ENCODE measurements at regions of chr4 and their contacts with region 1.

Region 1: DNA sequence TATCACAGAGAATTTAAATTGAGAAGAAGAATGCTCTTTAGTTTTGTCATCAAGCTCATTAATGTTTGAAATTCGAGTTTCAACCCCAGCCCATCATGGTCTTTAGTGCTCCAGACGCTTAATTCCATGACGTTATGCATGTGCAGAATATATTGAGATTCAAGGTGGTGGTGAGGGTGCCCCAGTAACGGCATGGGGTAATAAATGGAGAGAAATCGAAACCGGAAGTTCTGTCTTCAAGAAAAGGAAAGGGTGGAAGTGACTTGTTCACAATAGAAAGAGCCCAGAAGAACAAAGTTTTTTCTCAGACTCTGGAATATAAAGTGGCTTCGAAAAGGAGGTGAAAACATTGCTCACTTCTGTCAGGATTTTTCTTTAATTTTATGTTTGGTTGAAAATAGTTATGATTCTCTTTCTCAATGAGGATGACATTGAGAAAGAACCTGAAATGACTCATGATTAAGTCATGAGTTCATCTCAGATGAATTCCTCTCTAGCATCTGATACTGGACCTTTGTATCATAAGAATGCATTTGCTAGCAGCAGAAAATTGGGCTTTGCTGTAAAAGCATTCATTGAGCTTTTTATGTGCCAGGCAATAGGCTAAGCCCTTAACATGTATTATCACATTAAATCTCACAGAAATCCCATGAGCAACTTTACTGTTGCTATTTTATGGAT is 779 bp upstream of the DDX60L start:
- DNase-seq: peak; percentile 85
- ATAC-seq: peak; percentile 21; the same call in 1 of the 2 replicates
- H3K4me3 ChIP-seq: peak overlapping the region; percentile 62
- H3K27ac ChIP-seq: peak overlapping the region; percentile 80
- H3K4me1 ChIP-seq: peaks cover 10% of the 10 kb centered on the region
- H3K27me3 ChIP-seq: no peaks in the 10 kb centered on the region
- CTCF ChIP-seq: no peak
- POLR2A ChIP-seq: no peak
- RAD21 ChIP-seq: no peak

Region 2: GRCh38 chr4:168153596-168154440 is 327.3 kb before region 1 on chr4:
- CTCF ChIA-PET with region 1: no interaction called
- POLR2A ChIA-PET with region 1: no interaction called
- dilution Hi-C with region 1: no loop called
- in situ Hi-C with region 1: no loop called
- intact Hi-C with region 1: no loop called
- DNase-seq: peak; percentile 83
- ATAC-seq: peak; percentile 91
- H3K4me3 ChIP-seq: peak overlapping the region; percentile 24; the same call in 1 of the 2 replicates
- H3K27ac ChIP-seq: no peak overlapping the region
- H3K4me1 ChIP-seq: no peaks in the 10 kb centered on the region
- H3K27me3 ChIP-seq: no peaks in the 10 kb centered on the region
- CTCF ChIP-seq: peak; percentile 87
- POLR2A ChIP-seq: no peak
- RAD21 ChIP-seq: peak; percentile 83

Region 3: DNA sequence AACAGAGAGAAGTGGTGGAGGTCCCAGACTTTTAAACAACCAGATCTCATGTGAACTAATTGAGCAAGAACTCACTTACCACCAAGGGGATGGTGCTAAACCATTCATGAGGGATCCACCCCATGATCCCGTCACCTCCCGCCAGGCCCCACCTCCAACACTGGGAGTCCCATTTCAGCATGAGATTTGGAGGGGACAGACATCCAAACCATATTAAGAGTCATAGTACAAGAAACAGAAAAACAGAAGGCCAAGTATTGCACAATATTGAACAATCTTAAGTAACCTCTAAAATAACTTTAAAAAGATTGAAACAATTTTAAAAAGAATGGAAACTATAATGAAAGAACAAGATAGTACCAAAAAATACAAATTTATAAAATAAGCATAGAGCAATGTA is 419.0 kb after region 1 on chr4:
- CTCF ChIA-PET with region 1: no interaction called
- POLR2A ChIA-PET with region 1: interaction called, 19 read pairs
- dilution Hi-C with region 1: no loop called
- in situ Hi-C with region 1: no loop called
- intact Hi-C with region 1: no loop called
- DNase-seq: no peak
- ATAC-seq: no peak; the same call in 1 of the 2 replicates
- H3K4me3 ChIP-seq: no peak overlapping the region
- H3K27ac ChIP-seq: peak overlapping the region; percentile 69; the same call in 1 of the 2 replicates
- H3K4me1 ChIP-seq: no peaks in the 10 kb centered on the region
- H3K27me3 ChIP-seq: no peaks in the 10 kb centered on the region
- CTCF ChIP-seq: no peak
- POLR2A ChIP-seq: no peak
- RAD21 ChIP-seq: no peak

Region 4: GRCh38 chr4:169147191-169147590 is 666.1 kb after region 1 on chr4:
- CTCF ChIA-PET with region 1: no interaction called
- POLR2A ChIA-PET with region 1: no interaction called
- dilution Hi-C with region 1: no loop called
- in situ Hi-C with region 1: no loop called
- intact Hi-C with region 1: no loop called
- DNase-seq: peak; percentile 34
- ATAC-seq: no peak
- H3K4me3 ChIP-seq: no peak overlapping the region
- H3K27ac ChIP-seq: no peak overlapping the region
- H3K4me1 ChIP-seq: peaks cover 9% of the 10 kb centered on the region
- H3K27me3 ChIP-seq: no peaks in the 10 kb centered on the region
- CTCF ChIP-seq: no peak
- POLR2A ChIP-seq: no peak
- RAD21 ChIP-seq: no peak

Region 5: DNA sequence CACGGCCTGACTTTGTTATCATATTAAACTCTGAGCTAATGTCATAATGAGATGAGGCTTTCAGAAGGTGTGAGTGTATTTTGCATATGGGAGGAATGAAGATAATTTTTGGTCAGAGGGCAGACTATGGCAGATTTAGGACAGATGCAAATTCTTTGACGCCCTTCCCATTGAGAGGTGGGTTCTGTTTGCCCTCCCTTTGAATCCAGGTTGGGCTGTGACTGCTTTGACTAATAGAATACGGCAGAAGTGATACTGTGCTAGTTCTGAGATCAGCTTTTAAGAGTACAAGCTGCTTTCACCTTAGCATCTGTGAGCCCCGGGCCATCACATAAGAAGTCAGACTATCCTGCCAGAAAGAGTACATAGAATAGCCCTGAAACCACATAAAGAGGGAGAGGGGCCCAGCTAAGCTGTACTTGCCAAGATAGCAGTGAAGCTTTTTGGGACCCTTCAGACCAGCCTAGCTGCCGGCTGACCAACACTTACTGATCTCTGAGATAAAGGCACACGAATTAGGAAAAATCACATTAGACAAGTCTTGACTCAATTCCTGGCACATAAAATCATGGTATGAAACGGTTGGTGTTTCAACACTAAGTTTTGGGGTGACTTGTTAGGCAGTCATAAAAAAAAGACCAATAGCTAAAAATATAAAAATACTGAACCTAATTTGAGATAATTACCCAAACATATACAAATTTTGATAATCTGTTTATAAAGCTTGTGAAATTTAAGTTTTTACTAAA is 956.4 kb after region 1 on chr4:
- CTCF ChIA-PET with region 1: no interaction called
- POLR2A ChIA-PET with region 1: no interaction called
- dilution Hi-C with region 1: no loop called
- in situ Hi-C with region 1: no loop called
- intact Hi-C with region 1: no loop called
- DNase-seq: no peak
- ATAC-seq: no peak
- H3K4me3 ChIP-seq: no peak overlapping the region
- H3K27ac ChIP-seq: no peak overlapping the region
- H3K4me1 ChIP-seq: no peaks in the 10 kb centered on the region
- H3K27me3 ChIP-seq: no peaks in the 10 kb centered on the region
- CTCF ChIP-seq: no peak
- POLR2A ChIP-seq: no peak
- RAD21 ChIP-seq: no peak